ENCODE measurements at regions of chr1 and their contacts with region 1.

Region 1: DNA sequence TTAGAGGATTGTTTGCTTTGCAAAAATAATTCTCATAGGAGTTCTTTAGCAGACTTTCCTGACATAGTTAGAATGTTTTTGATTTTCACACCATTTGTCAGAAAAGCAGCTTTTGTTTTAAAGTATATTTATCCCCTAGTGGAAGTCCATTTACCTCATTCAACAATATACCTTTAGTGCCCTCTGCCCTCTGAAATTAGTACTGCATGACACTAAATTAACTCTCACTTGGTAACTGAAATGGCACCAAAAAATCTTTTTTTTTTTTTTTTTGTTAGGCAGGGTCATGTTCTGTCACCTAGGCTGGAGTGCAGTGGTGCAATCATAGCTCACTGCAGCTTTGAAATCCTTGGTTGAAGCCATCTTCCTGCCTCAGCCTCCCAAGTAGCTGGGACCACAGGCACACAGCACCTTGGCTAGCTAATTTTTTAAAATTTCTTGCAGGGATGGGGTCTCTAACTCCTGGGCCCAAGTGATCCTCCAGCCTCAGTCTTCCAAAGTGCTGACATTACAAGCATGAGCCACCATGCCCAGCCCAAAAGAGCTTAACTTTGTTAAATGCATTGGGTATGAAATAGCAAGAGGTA is 13.6 kb downstream of the LRRC42 start:
- DNase-seq: no peak
- H3K4me3 Mint-ChIP-seq: no peak overlapping the region
- H3K27ac Mint-ChIP-seq: no peak overlapping the region
- H3K4me1 Mint-ChIP-seq: peaks cover 15% of the 10 kb centered on the region
- H3K27me3 Mint-ChIP-seq: no peaks in the 10 kb centered on the region

Region 2: GRCh38 chr1:53869454-53870117 is 90.2 kb before region 1 on chr1:
- CTCF ChIA-PET with region 1: interaction called, 26 read pairs
- DNase-seq: no peak
- H3K4me3 Mint-ChIP-seq: no peak overlapping the region
- H3K27ac Mint-ChIP-seq: no peak overlapping the region
- H3K4me1 Mint-ChIP-seq: no peaks in the 10 kb centered on the region
- H3K27me3 Mint-ChIP-seq: no peaks in the 10 kb centered on the region

Region 3: DNA sequence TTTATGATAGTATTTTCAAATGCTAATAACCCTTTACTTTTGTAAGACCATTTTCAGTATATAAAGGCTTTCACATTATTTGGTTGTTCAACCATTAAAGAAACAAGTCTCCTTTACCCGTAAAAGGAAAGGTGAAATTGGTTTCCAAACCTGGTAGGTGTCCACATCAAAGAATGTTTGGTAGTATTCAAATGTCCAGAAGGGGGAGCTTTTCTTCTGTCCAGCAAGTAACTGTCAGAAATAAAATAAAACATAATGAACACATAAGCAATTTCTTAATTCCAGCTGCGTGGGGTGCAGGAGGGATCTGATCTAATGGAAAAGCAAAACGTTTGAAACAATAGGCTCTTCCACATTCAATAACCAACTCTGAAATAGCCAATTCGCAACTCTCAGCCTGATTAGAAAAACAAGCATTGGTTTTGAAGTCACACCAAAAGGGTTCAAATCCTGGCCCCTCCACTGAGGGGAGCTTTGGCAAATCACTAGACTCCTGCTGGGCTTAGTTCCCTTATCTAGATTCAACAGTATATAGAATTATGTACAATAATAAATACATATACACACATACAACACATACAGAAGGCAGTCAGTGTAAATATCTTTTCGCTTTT is 81.2 kb before region 1 on chr1:
- CTCF ChIA-PET with region 1: interaction called, 56 read pairs
- DNase-seq: no peak
- H3K4me3 Mint-ChIP-seq: no peak overlapping the region
- H3K27ac Mint-ChIP-seq: no peak overlapping the region
- H3K4me1 Mint-ChIP-seq: no peaks in the 10 kb centered on the region
- H3K27me3 Mint-ChIP-seq: no peaks in the 10 kb centered on the region

Region 4: DNA sequence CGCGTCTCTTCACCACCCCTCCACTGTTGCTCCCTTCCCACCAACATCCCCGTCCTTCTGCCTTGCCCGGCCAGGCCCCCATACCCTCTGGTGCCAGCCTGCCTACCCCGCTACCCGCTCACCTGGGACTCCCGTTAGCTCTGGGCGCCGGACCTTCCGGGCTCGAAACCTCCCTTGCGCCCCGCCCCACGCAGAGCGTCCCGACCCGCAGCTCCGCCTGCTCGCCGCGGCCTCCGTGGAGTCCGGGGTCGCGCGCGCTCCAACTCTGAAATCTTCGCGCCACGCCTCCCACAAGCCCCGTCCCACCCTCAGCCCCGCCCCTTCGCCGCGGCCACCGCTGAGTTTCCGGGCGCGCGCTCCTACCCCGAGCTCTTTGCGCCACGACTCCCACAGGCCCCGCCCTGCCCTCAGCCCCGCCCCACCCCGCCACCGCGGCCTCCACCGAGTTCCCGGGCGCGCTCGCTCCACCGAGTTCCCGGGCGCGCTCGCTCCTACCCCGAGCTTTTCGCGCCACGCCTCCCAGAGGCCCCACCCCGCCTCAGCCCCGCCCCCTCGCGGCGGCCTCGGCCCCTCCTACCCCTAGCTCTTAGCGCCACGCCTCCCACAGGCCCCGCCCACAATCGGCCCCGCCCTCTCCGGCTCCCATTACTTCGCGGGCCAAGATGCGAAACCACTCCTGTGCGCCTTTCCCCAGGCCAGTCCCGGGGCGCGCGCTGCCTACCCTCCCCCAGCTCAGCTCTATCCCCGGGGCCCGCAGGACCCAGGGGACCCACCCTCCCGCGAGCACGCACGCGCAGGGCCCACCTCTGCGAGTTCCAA is 14.1 kb before region 1 on chr1 and contains the start of gene IFT25:
- CTCF ChIA-PET with region 1: interaction called, 24 read pairs
- DNase-seq: peak; percentile 98
- H3K4me3 Mint-ChIP-seq: peak within 1 kb of the TSS; percentile 97
- H3K27ac Mint-ChIP-seq: peak within 1 kb of the TSS; percentile 97
- H3K4me1 Mint-ChIP-seq: peaks cover 57% of the 10 kb centered on the region
- H3K27me3 Mint-ChIP-seq: no peaks in the 10 kb centered on the region

Region 5: DNA sequence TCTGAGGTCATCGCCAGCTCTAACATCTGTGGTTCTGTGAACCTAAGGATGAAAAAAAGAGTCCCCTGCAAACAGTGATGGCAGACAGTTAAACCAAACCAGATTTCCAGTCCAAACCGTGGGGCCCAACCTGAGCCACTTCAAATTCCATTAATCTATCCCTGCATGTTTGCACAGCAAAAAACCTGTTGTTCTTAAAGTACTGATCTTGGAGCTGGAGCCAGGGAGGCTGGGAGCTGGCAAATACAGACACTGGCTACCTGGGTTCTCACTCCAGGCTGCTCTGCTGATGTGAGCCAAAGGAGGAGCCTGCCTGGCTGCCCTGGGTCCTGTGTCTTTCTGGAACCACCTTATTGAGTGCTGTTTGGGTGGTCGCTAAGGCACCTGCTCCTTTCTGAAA is 41.8 kb after region 1 on chr1:
- CTCF ChIA-PET with region 1: no interaction called
- DNase-seq: no peak
- H3K4me3 Mint-ChIP-seq: no peak overlapping the region
- H3K27ac Mint-ChIP-seq: no peak overlapping the region
- H3K4me1 Mint-ChIP-seq: no peaks in the 10 kb centered on the region
- H3K27me3 Mint-ChIP-seq: peaks cover 21% of the 10 kb centered on the region

Region 6: GRCh38 chr1:54096227-54096876 is 136.6 kb after region 1 on chr1:
- CTCF ChIA-PET with region 1: no interaction called
- DNase-seq: no peak
- H3K4me3 Mint-ChIP-seq: no peak overlapping the region
- H3K27ac Mint-ChIP-seq: no peak overlapping the region
- H3K4me1 Mint-ChIP-seq: no peaks in the 10 kb centered on the region
- H3K27me3 Mint-ChIP-seq: no peaks in the 10 kb centered on the region